Heart right ventricle (tissue), 16 donors: ENCODE measurements at regions of chr3 and their contacts with region 1.

Region 1: DNA sequence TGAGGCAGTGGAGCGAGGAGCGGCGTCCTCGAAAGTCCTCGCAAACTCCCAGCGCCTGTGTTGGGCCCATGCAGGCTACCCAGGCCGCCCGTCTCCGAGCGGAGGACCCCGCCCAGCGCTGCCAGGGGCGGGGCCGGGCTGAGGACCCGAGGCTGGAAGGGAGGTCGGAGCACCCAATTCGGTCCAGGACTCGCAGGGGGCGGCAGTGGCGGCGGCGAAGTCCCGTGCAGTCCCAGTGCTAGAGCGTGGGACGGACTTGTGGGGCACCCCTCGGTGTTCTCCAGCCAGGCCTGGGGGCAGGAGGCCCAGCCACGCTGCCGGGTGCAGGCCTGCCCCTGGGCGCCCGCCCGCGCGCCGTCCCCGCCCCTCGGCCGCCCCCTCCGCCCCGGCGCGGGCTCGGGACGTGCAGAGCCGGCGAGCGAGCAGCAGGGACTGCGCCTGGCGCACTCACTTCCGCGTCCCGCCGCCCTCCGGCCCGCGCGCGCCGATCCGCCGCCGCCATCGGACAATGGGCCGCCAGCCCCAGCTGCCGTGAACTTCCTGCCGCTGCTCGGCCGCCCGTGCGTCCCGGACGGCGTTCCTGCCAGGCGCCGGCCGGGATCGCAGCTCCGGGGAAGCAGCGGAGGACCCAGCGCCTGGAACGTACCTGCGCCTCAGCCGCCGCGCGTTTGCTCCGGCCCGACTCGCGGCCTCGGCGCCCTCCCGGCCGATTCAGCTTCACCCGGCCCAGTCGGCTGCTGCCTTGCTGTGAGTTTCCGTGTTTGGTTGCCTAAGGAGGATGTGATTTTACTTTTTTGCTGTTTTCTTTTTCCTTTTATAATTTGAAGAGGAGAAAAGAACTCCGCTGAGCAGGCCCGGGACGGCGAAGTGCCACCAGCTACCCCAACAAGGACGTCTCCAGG is 592 bp upstream of the LIMD1 start:
- DNase-seq: peak; percentile 63 to 82
- ATAC-seq: peak; percentile 65 to 91 (median 82)
- H3K4me3 ChIP-seq: peak overlapping the region; percentile 68 to 89 (median 80)
- H3K27ac ChIP-seq: peak overlapping the region; percentile 62 to 99 (median 93)
- H3K4me1 ChIP-seq: peaks cover 26 to 59% (median 54%) of the 10 kb centered on the region in 9 donors
- H3K27me3 ChIP-seq: no peaks in the 10 kb centered on the region
- CTCF ChIP-seq: peak in 1 of 9 donors; percentile 5

Region 2: DNA sequence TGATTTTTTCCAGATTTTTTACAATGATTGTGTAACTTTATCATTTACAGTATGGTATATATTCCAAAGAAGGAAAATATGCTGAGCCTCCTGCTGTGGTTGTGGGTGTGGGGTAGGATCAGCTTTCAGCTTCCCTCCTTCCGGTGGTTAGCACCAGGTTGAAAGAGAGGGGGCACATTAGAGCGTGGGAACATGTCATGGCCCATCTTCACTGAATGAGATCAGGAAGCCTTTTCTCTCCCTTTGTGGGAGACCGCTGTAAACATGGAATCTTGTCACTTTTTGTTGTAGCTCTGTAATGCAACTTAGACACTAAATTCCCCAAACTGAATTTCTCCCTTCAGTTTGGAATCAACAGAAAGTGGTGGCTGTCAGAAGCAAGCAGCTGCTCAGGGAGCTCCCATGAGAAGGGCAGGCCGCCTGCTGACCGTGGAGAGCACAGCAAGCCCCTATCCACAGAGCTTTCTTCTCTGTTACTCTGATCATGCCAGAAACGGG is 86.1 kb before region 1 on chr3:
- intact Hi-C with region 1: loop called in 6 of 10 experiments (anchors 2 to 5 kb)
- DNase-seq: peak; percentile 40 to 41
- ATAC-seq: peak in 7 of 8 donors; percentile 46 to 75 (median 67)
- H3K4me3 ChIP-seq: no peak overlapping the region
- H3K27ac ChIP-seq: peak overlapping the region in 7 of 10 donors; percentile 18 to 64 (median 32)
- H3K4me1 ChIP-seq: peaks cover 0 to 22% (median 13%) of the 10 kb centered on the region in 9 donors
- H3K27me3 ChIP-seq: no peaks in the 10 kb centered on the region
- CTCF ChIP-seq: peak in 6 of 9 donors; percentile 31 to 53 (median 42)

Region 3: DNA sequence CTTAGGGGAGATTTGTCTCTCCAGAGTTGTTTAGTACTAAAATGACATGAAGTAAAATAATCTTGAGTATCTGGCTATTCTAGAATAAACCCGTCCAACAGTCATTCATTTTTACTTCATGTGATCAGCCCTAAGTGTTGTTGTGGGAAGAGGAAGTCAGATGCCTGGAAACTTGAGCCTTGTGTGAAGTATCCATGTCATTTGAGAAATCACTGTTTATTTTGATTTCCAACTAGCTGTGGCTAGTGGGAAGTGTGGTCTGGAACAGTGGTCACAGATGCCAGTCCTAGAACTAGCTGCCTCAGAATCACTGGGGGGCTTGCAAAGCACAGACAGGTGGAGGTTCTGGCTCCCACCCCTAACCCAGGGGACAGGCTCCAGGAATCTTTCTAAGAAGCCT is 77.1 kb before region 1 on chr3:
- intact Hi-C with region 1: loop called in 6 of 10 experiments (anchors 5 kb)
- DNase-seq: no peak
- ATAC-seq: peak in 1 of 8 donors; percentile 22
- H3K4me3 ChIP-seq: no peak overlapping the region
- H3K27ac ChIP-seq: peak overlapping the region in 2 of 10 donors; percentile 29 to 54
- H3K4me1 ChIP-seq: peaks cover 0 to 15% (median 5%) of the 10 kb centered on the region in 9 donors
- H3K27me3 ChIP-seq: no peaks in the 10 kb centered on the region
- CTCF ChIP-seq: no peak

Region 4: DNA sequence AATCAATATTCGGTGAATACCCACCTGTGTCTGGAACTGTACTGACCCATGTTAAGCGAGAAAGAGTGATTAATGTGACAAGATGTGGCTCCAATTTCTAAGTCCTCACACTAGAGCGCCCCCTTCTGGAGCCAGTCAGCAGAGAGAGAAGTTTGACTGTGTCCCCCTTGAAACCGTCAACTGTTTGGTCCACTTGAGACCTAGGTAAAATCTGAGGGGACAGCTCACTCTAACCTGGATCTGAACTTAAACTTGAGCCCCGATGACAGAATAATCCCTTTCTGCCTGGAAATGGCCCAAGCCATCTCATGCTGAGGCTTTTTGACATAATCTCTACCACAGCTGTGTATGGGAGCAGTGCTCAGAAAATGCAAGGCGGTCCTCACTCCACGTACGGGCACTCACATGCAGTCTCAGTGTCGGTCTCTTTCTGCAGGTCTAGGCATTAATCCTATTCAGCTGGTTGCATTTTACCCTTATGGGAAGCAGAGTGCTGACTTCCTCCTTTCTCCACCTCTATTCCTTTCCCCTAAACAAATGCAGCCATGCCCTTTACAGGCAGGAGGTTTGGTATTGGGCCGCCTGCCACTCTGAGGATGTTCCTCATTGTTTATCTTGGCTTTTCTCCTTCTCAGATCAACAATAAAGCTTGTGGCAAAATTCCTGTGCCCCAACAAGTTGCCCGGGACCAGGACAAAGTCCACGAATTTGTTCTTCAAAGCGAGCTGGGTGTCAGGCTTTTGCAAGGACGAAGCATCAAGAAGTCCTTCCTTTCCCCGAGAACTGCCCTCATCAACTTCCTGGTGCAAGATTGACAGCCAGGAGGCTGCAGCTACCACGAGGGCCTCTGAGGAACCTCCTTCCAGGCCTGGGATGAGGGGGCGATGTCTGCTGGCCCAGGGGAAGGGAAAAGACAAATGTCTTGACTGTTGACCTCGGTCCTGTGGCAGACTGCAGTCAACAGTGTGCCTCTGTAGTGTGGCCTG is 47.0 kb before region 1 on chr3:
- intact Hi-C with region 1: loop called in 2 of 10 experiments (anchors 5 to 10 kb)
- DNase-seq: no peak
- ATAC-seq: no peak
- H3K4me3 ChIP-seq: no peak overlapping the region
- H3K27ac ChIP-seq: peak overlapping the region in 8 of 10 donors; percentile 17 to 84 (median 56)
- H3K4me1 ChIP-seq: peaks cover 14 to 84% (median 68%) of the 10 kb centered on the region in 9 donors
- H3K27me3 ChIP-seq: no peaks in the 10 kb centered on the region
- CTCF ChIP-seq: peak in 7 of 9 donors; percentile 14 to 38 (median 30)

Region 5: DNA sequence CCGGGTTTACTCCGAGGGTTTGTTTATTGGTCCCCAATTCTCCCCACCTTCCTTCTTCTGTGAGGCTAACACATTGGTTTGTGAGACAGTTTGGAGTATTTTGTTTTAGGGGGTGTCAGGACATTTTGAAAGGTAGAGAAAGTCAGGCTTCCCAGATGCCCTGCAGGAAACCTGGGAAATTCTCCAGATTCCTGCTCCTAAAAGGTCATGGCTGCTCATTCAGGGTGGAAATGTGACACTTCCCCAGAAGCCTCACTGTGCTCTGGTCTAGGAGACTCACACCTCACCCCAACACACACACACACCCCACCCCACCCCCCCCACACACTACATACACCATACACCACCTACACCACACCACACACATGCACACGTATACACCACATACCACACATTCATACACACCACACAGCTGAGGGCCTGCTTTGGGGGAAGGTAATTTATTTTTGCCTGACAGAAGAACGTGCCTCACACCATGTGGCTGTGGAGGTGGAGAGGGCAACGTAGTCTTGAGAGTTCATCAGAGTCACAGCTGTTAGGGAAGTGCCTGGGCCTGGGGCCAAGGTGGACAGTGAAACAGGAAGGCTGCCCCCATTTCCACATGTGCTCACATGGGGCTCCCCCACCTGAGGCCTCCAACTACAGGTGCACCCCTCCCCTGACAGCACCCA is 39.8 kb before region 1 on chr3:
- intact Hi-C with region 1: loop called in 2 of 10 experiments (anchors 5 to 10 kb)
- DNase-seq: peak; percentile 59 to 64
- ATAC-seq: peak; percentile 2 to 48 (median 18)
- H3K4me3 ChIP-seq: no peak overlapping the region
- H3K27ac ChIP-seq: peak overlapping the region; percentile 54 to 83 (median 75)
- H3K4me1 ChIP-seq: peaks cover 37 to 82% (median 64%) of the 10 kb centered on the region in 9 donors
- H3K27me3 ChIP-seq: no peaks in the 10 kb centered on the region
- CTCF ChIP-seq: no peak

Region 6: GRCh38 chr3:45560281-45560971 is 33.5 kb before region 1 on chr3:
- intact Hi-C with region 1: loop called in 1 of 10 experiments (anchors 1 kb)
- DNase-seq: peak; percentile 72 to 84
- ATAC-seq: peak; percentile 88 to 95 (median 94)
- H3K4me3 ChIP-seq: no peak overlapping the region
- H3K27ac ChIP-seq: peak overlapping the region; percentile 79 to 93 (median 84)
- H3K4me1 ChIP-seq: peaks cover 9 to 41% (median 27%) of the 10 kb centered on the region in 9 donors
- H3K27me3 ChIP-seq: no peaks in the 10 kb centered on the region
- CTCF ChIP-seq: no peak